ENCODE measurements at regions of chr17 and their contacts with region 1.

Region 1: DNA sequence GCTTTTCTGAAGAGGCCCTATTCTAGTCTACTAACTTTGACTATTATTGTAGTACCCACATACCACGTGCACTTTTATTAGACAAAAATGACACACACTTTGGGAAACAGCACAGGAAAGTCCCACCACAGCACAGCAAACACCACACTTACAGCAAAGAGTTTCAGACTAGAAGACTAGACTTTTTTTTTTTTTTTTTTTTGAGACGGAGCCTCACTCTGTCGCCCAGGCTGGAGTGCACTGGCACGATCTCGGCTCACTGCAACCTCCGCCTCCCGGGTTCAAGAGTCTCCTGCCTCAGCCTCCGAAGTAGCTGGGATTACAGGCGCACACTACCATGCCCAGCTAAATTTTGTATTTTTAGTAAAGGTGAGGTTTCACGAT is 20.1 kb downstream of the YWHAE start:
- DNase-seq: peak; percentile 74
- ATAC-seq: peak; percentile 82
- H3K4me3 ChIP-seq: peak overlapping the region; percentile 7; the same call in 1 of the 2 replicates
- H3K27ac ChIP-seq: peak overlapping the region; percentile 58
- H3K4me1 ChIP-seq: peaks cover 63% of the 10 kb centered on the region
- H3K27me3 ChIP-seq: no peaks in the 10 kb centered on the region
- CTCF ChIP-seq: no peak
- EP300 ChIP-seq: no peak; a peak in 2 of 4 replicates
- POLR2A ChIP-seq: no peak
- RAD21 ChIP-seq: no peak

Region 2: DNA sequence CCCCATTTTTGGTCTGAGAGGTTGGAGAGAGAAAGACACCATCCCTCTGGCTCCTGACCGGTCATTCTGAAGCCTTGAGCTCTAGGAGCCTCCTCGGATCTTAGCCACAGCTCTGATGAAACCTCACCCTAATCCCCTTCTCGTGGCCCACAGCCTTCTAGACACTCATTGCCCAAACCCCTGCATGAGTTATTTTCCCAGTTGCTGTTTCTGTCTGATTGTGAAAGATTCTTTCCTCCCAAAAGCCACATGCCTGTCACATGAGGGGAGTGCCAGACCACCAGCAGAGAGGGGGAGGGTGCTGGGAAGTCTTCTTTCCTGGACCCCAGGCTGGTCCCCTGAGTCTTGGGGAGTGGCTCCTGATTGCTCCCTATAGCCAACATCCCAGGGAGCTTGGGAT is 182.5 kb before region 1 on chr17:
- CTCF ChIA-PET with region 1: no interaction called
- POLR2A ChIA-PET with region 1: no interaction called
- RAD21 ChIA-PET with region 1: no interaction called
- SMC1A ChIA-PET with region 1: no interaction called
- in situ Hi-C with region 1: no loop called
- intact Hi-C with region 1: no loop called
- DNase-seq: no peak
- ATAC-seq: peak; percentile 10
- H3K4me3 ChIP-seq: peak overlapping the region; percentile 29; the same call in 1 of the 2 replicates
- H3K27ac ChIP-seq: peak overlapping the region; percentile 89
- H3K4me1 ChIP-seq: peaks cover 50% of the 10 kb centered on the region
- H3K27me3 ChIP-seq: no peaks in the 10 kb centered on the region
- CTCF ChIP-seq: no peak
- EP300 ChIP-seq: no peak
- POLR2A ChIP-seq: no peak
- RAD21 ChIP-seq: no peak

Region 3: DNA sequence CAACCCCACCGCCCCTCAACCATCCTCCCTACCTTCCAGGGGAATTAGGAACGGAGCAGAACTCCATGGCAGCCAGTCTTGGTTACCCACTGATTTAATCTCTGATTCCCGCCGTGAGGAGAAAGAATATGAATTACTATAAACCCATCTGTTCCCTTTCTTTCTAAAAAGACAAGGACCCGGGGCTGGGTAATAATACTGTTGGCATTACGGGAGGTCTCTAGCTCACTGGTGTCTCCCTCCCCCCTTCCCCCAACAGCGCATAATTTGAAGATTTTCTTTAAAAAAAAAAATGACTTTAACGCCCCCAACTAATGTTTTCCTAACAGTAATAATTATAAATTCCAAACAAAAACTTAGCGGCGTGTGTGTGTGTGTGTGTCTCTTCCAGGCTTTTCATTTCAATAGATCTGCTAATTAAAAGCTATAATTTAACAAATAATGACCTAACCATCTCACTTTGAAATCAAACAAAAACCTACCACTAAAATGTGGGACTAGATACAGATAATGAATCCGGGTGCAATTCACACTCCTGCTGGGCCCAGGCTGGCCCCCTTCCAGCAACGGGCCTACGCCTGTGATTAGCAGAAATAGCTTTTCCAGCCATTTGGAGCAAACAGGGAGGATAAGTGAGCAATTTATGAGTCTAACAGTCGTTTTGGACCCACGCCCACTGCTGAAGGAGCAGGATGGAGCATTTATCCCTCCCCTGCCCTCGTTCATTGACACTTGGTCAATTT is 127.9 kb before region 1 on chr17:
- CTCF ChIA-PET with region 1: no interaction called
- POLR2A ChIA-PET with region 1: no interaction called
- RAD21 ChIA-PET with region 1: no interaction called
- SMC1A ChIA-PET with region 1: no interaction called
- in situ Hi-C with region 1: no loop called
- intact Hi-C with region 1: no loop called
- DNase-seq: no peak
- ATAC-seq: no peak
- H3K4me3 ChIP-seq: no peak overlapping the region
- H3K27ac ChIP-seq: no peak overlapping the region
- H3K4me1 ChIP-seq: no peaks in the 10 kb centered on the region
- H3K27me3 ChIP-seq: no peaks in the 10 kb centered on the region
- CTCF ChIP-seq: no peak
- EP300 ChIP-seq: no peak
- POLR2A ChIP-seq: no peak
- RAD21 ChIP-seq: no peak

Region 4: DNA sequence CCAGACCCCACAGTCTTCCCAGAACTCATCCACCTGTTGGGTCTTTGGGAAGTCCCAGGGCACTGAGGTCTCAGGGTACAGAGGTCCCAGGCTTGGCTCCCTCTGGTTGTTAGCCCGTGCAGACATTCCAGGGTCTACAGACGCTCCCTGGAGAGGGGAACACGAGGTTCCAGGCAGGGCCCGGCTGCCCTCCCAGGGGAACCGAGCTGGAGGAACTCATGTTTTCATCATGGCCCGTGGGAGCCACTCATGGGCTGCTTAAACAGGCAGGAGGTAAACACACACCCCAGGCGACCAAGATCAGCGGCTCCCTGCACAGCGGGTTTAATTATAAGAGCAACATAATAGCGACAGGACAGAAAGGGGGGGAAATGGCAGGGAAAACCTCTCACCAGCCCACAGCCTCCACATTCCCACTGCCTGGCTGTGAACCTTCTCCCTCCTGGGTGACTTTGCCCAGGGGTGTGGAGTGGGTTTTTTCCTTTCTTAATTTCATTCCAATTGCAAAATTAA is 64.0 kb before region 1 on chr17:
- CTCF ChIA-PET with region 1: no interaction called
- POLR2A ChIA-PET with region 1: no interaction called
- RAD21 ChIA-PET with region 1: no interaction called
- SMC1A ChIA-PET with region 1: no interaction called
- in situ Hi-C with region 1: no loop called
- intact Hi-C with region 1: no loop called
- DNase-seq: no peak
- ATAC-seq: no peak
- H3K4me3 ChIP-seq: no peak overlapping the region
- H3K27ac ChIP-seq: no peak overlapping the region
- H3K4me1 ChIP-seq: no peaks in the 10 kb centered on the region
- H3K27me3 ChIP-seq: no peaks in the 10 kb centered on the region; a peak in 1 of 4 replicates
- CTCF ChIP-seq: no peak
- EP300 ChIP-seq: no peak
- POLR2A ChIP-seq: no peak
- RAD21 ChIP-seq: no peak

Region 5: DNA sequence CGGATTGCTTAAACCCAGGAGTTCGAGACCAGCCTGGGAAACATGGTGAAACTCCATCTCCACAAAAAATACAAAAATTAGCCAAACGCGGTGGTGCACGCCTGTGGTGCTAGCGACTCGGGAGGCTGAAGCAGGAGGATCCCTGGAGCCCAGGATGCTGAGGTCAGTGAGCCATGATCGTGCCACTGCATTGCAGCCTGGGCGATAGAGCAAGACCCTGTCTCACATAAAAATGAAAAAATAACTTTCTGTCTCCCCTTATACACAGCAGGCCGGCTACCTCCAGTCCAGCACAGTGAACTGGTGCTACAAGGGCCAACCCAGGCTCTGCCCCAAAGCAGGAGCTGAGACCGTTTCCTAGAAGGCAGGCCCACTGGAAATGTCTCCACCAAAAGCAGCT is 39.6 kb before region 1 on chr17:
- CTCF ChIA-PET with region 1: interaction called, 3 read pairs
- POLR2A ChIA-PET with region 1: interaction called, 11 read pairs
- RAD21 ChIA-PET with region 1: interaction called, 3 read pairs
- SMC1A ChIA-PET with region 1: no interaction called
- in situ Hi-C with region 1: no loop called
- intact Hi-C with region 1: no loop called
- DNase-seq: no peak
- ATAC-seq: no peak
- H3K4me3 ChIP-seq: no peak overlapping the region
- H3K27ac ChIP-seq: no peak overlapping the region
- H3K4me1 ChIP-seq: peaks cover 9% of the 10 kb centered on the region
- H3K27me3 ChIP-seq: no peaks in the 10 kb centered on the region
- CTCF ChIP-seq: no peak
- EP300 ChIP-seq: no peak
- POLR2A ChIP-seq: no peak
- RAD21 ChIP-seq: no peak

Region 6: DNA sequence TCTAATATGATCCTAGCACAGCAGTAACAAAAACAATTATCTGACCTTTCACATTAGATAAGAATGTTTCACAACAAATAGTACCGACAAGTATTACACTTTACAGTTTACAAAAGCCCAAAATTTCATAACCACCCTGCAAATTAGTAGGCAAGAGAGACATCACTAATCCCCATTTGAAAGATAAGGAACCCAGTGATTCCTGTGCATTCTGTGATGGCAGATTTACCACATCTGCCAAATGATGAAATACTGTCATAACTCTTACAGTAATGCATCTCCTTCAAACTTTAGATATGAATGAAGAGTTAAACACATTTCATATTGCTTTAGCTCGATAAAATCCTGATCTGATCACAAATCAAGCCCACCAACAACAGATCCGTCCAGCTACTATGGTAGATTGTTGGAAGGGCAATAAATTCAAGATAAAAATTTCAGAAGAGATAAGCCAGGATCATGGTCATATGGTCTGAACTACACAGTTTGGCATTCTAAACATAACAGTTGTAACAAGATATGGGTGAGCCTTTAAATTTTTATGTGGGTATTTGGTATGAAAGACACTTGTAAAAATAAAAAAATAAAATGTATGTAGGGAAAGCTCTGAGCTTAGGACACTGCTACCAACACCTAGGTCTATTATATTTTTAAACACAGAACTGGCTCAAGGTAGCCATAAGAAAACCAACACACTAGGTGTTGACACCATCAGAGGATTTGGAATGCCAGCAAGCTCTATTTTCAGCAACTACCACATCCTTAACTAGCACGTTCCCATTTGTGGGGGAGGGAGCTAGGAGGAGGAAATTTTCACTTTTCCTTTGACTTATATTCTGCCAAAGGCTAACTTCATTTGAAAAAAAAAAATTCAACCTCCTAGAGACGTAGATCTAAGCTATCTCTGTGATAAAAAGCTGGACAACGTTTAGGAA is 10.8 kb after region 1 on chr17:
- CTCF ChIA-PET with region 1: interaction called, 16 read pairs
- POLR2A ChIA-PET with region 1: interaction called, 28 read pairs
- RAD21 ChIA-PET with region 1: interaction called, 5 read pairs
- SMC1A ChIA-PET with region 1: interaction called, 61 read pairs
- in situ Hi-C with region 1: no loop called
- intact Hi-C with region 1: no loop called
- DNase-seq: no peak
- ATAC-seq: no peak
- H3K4me3 ChIP-seq: 0 out of 2 replicates have a peak overlapping the region, but pooled peaks have one; percentile 5
- H3K27ac ChIP-seq: no peak overlapping the region
- H3K4me1 ChIP-seq: no peaks in the 10 kb centered on the region; the same call in 1 of the 2 replicates
- H3K27me3 ChIP-seq: no peaks in the 10 kb centered on the region
- CTCF ChIP-seq: no peak
- EP300 ChIP-seq: no peak
- POLR2A ChIP-seq: no peak
- RAD21 ChIP-seq: no peak

Region 7: GRCh38 chr17:1399679-1400512 is 20.0 kb after region 1 on chr17 and contains the start of gene YWHAE:
- CTCF ChIA-PET with region 1: interaction called, 8 read pairs
- POLR2A ChIA-PET with region 1: interaction called, 17 read pairs
- RAD21 ChIA-PET with region 1: interaction called, 10 read pairs
- SMC1A ChIA-PET with region 1: interaction called, 24 read pairs
- in situ Hi-C with region 1: no loop called
- intact Hi-C with region 1: no loop called
- DNase-seq: peak; percentile 62
- ATAC-seq: peak; percentile 96
- H3K4me3 ChIP-seq: peak within 1 kb of the TSS; percentile 83
- H3K27ac ChIP-seq: peak within 1 kb of the TSS; percentile 93
- H3K4me1 ChIP-seq: no peaks in the 10 kb centered on the region
- H3K27me3 ChIP-seq: no peaks in the 10 kb centered on the region
- CTCF ChIP-seq: no peak
- EP300 ChIP-seq: no peak
- POLR2A ChIP-seq: peak; percentile 98
- RAD21 ChIP-seq: no peak
- polyA plus RNA-seq, gene YWHAE: 369 to 425 TPM

Measured in GM12878 (cell line).